GM12878 (cell line): ENCODE measurements at regions of chr2 and their contacts with region 1.

Region 1: DNA sequence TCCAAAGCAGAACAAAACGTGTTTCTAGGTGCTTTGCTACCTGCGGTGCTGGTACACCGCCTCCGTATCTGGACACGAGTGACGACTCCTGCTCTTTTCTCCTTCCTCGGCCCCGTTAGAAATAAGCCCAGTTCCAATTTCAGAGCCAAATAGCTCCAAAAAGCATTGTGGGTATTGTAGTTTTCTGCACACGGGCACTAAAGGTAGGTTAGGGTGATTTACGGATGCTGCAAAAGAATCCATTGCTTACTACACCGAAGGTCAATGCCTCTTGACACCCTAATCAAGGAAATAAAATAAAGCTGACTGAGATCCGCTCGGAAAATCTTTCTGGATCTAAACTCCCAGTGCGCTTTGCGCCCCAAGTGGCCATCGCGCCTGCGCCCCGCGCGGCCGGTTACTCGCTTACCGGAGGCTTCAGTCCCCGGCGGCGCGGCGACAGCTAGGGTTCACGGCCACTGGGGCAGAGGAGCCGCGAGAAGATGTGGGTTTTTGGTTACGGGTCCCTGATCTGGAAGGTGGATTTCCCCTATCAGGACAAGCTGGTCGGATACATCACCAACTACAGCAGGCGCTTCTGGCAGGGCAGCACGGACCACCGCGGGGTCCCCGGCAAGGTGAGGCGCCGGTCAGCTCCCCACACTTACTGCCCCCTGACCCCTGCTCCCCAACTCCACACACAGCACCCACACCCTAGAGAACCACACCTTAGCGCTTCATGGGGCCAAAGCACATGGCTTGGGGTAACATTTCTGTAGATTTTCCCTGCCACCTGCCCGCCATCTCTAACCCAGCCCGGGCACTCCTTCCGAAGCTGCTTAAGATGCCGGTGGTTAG is at the start of gene CHAC2:
- DNase-seq: peak; percentile 66
- ATAC-seq: peak; percentile 97
- H3K4me3 ChIP-seq: peak within 1 kb of the TSS; percentile 92
- H3K27ac ChIP-seq: peak within 1 kb of the TSS; percentile 92
- H3K4me1 ChIP-seq: peaks cover 5% of the 10 kb centered on the region; the same call in 1 of the 2 replicates
- H3K27me3 ChIP-seq: no peaks in the 10 kb centered on the region
- CTCF ChIP-seq: peak in 1 of 3 experiments; percentile 31; a peak in 2 of 6 replicates
- EP300 ChIP-seq: no peak
- POLR2A ChIP-seq: peak; percentile 91
- RAD21 ChIP-seq: no peak
- polyA plus RNA-seq, gene CHAC2: 37.8 to 50.8 TPM

Region 2: GRCh38 chr2:53584986-53585385 is 182.6 kb before region 1 on chr2:
- CTCF ChIA-PET with region 1: no interaction called
- POLR2A ChIA-PET with region 1: no interaction called
- RAD21 ChIA-PET with region 1: no interaction called
- SMC1A ChIA-PET with region 1: no interaction called
- in situ Hi-C with region 1: no loop called
- intact Hi-C with region 1: no loop called
- DNase-seq: no peak
- ATAC-seq: no peak
- H3K4me3 ChIP-seq: no peak overlapping the region
- H3K27ac ChIP-seq: no peak overlapping the region
- H3K4me1 ChIP-seq: no peaks in the 10 kb centered on the region
- H3K27me3 ChIP-seq: no peaks in the 10 kb centered on the region
- CTCF ChIP-seq: no peak
- EP300 ChIP-seq: no peak
- POLR2A ChIP-seq: no peak
- RAD21 ChIP-seq: no peak

Region 3: GRCh38 chr2:53633441-53633840 is 134.2 kb before region 1 on chr2:
- CTCF ChIA-PET with region 1: no interaction called
- POLR2A ChIA-PET with region 1: no interaction called
- RAD21 ChIA-PET with region 1: no interaction called
- SMC1A ChIA-PET with region 1: no interaction called
- in situ Hi-C with region 1: no loop called
- intact Hi-C with region 1: no loop called
- DNase-seq: no peak
- ATAC-seq: no peak
- H3K4me3 ChIP-seq: no peak overlapping the region
- H3K27ac ChIP-seq: no peak overlapping the region
- H3K4me1 ChIP-seq: no peaks in the 10 kb centered on the region
- H3K27me3 ChIP-seq: no peaks in the 10 kb centered on the region
- CTCF ChIP-seq: no peak
- EP300 ChIP-seq: no peak
- POLR2A ChIP-seq: no peak
- RAD21 ChIP-seq: no peak

Region 4: GRCh38 chr2:53751728-53752127 is 15.9 kb before region 1 on chr2:
- CTCF ChIA-PET with region 1: interaction called, 3 read pairs
- POLR2A ChIA-PET with region 1: interaction called, 6 read pairs
- RAD21 ChIA-PET with region 1: no interaction called
- SMC1A ChIA-PET with region 1: interaction called, 14 read pairs
- in situ Hi-C with region 1: no loop called
- intact Hi-C with region 1: no loop called
- DNase-seq: no peak
- ATAC-seq: peak; percentile 94
- H3K4me3 ChIP-seq: no peak overlapping the region
- H3K27ac ChIP-seq: peak overlapping the region; percentile 54; the same call in 1 of the 2 replicates
- H3K4me1 ChIP-seq: peaks cover 22% of the 10 kb centered on the region; the same call in 1 of the 2 replicates
- H3K27me3 ChIP-seq: no peaks in the 10 kb centered on the region
- CTCF ChIP-seq: no peak
- EP300 ChIP-seq: no peak
- POLR2A ChIP-seq: no peak
- RAD21 ChIP-seq: no peak

Region 5: GRCh38 chr2:53786705-53787612 is 19.3 kb after region 1 on chr2 and contains the starts of genes ASB3 and ERLEC1:
- CTCF ChIA-PET with region 1: interaction called, 14 read pairs
- POLR2A ChIA-PET with region 1: interaction called, 37 read pairs
- RAD21 ChIA-PET with region 1: interaction called, 12 read pairs
- SMC1A ChIA-PET with region 1: interaction called, 44 read pairs
- in situ Hi-C with region 1: no loop called
- intact Hi-C with region 1: loop called (anchors 2 kb)
- DNase-seq: peak; percentile 48
- ATAC-seq: peak; percentile 93
- H3K4me3 ChIP-seq: peak within 1 kb of the TSS; percentile 97
- H3K27ac ChIP-seq: peak within 1 kb of the TSS; percentile 86
- H3K4me1 ChIP-seq: 0 out of 2 replicates have a peak, but pooled peaks cover 2% of the 10 kb centered on the region
- H3K27me3 ChIP-seq: no peaks in the 10 kb centered on the region
- CTCF ChIP-seq: peak in 1 of 3 experiments; percentile 7; a peak in 1 of 6 replicates
- EP300 ChIP-seq: no peak
- POLR2A ChIP-seq: peak; percentile 96
- RAD21 ChIP-seq: no peak
- polyA plus RNA-seq, gene ASB3: 19.9 to 25.6 TPM
- polyA plus RNA-seq, gene ERLEC1: 14.1 to 22.3 TPM

Region 6: GRCh38 chr2:53970724-53971602 is 203.3 kb after region 1 on chr2 and contains the start of gene PSME4:
- CTCF ChIA-PET with region 1: no interaction called
- POLR2A ChIA-PET with region 1: interaction called, 13 read pairs
- RAD21 ChIA-PET with region 1: interaction called, 3 read pairs
- SMC1A ChIA-PET with region 1: no interaction called
- in situ Hi-C with region 1: no loop called
- intact Hi-C with region 1: no loop called
- DNase-seq: no peak
- ATAC-seq: peak; percentile 86
- H3K4me3 ChIP-seq: peak within 1 kb of the TSS; percentile 100
- H3K27ac ChIP-seq: peak within 1 kb of the TSS; percentile 86
- H3K4me1 ChIP-seq: peaks cover 4% of the 10 kb centered on the region; the same call in 1 of the 2 replicates
- H3K27me3 ChIP-seq: no peaks in the 10 kb centered on the region
- CTCF ChIP-seq: no peak
- EP300 ChIP-seq: no peak
- POLR2A ChIP-seq: peak; percentile 98
- RAD21 ChIP-seq: no peak
- polyA plus RNA-seq, gene PSME4: 20.2 to 29.7 TPM